ENCODE measurements at regions of chr17 and their contacts with region 1.

Region 1: GRCh38 chr17:28896884-28897768 is at the start of gene FLOT2:
- DNase-seq: peak; percentile 41 to 77 (median 76)
- ATAC-seq: peak; percentile 84
- H3K4me3 ChIP-seq: peak within 1 kb of the TSS; percentile 82
- H3K4me3 Mint-ChIP-seq: peak within 1 kb of the TSS; percentile 86 to 98 (median 96)
- H3K27ac ChIP-seq: peak within 1 kb of the TSS; percentile 96
- H3K27ac Mint-ChIP-seq: peak within 1 kb of the TSS; percentile 95 to 99 (median 97)
- H3K4me1 ChIP-seq: peaks cover 43 to 45% of the 10 kb centered on the region in 2 donors
- H3K4me1 Mint-ChIP-seq: peaks cover 32 to 80% (median 64%) of the 10 kb centered on the region in 7 donors
- H3K27me3 ChIP-seq: no peaks in the 10 kb centered on the region
- H3K27me3 Mint-ChIP-seq: no peaks in the 10 kb centered on the region
- total RNA-seq, gene FLOT2: 134 to 252 (median 191) TPM

Region 2: DNA sequence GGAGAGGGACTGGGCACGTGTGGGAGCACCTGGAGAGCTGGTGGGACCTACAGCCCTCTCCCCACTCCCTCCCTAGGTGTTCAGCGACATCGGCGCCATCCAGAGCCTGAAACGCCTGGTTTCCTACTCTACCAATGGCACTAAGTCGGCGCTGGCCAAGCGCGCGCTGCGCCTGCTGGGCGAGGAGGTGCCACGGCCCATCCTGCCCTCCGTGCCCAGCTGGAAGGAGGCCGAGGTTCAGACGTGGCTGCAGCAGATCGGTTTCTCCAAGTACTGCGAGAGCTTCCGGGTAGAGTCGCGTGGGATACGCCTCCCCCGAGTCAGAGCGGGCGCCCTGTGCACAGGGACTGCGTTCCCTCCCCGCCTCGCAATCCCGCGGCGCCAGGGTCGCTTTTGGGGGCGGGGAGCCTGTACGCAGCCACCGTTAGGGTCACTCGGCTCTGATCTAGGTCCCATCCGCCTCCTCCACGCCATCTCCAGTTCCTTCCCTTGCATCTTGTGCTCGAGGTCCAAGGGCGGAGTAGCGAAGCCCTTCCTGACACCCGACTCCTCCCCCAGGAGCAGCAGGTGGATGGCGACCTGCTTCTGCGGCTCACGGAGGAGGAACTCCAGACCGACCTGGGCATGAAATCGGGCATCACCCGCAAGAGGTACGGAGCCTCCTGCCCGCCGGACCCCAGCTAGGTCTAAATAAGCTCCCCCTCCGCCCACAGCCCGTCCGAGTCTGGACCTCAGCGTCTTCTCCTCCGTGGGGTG is 512.7 kb before region 1 on chr17:
- CTCF ChIA-PET with region 1: no interaction called
- POLR2A ChIA-PET with region 1: no interaction called
- intact Hi-C with region 1: no loop called
- DNase-seq: peak; percentile 27 to 67 (median 57)
- ATAC-seq: peak; percentile 93
- H3K4me3 ChIP-seq: peak overlapping the region; percentile 78
- H3K4me3 Mint-ChIP-seq: peak overlapping the region; percentile 88 to 96 (median 94)
- H3K27ac ChIP-seq: peak overlapping the region; percentile 67
- H3K27ac Mint-ChIP-seq: peak overlapping the region; percentile 37 to 88 (median 77)
- H3K4me1 ChIP-seq: peaks cover 6 to 14% of the 10 kb centered on the region in 2 donors
- H3K4me1 Mint-ChIP-seq: peaks cover 8 to 48% (median 33%) of the 10 kb centered on the region in 7 donors
- H3K27me3 ChIP-seq: no peaks in the 10 kb centered on the region
- H3K27me3 Mint-ChIP-seq: peaks cover 0 to 10% (median 6%) of the 10 kb centered on the region in 5 donors

Region 3: DNA sequence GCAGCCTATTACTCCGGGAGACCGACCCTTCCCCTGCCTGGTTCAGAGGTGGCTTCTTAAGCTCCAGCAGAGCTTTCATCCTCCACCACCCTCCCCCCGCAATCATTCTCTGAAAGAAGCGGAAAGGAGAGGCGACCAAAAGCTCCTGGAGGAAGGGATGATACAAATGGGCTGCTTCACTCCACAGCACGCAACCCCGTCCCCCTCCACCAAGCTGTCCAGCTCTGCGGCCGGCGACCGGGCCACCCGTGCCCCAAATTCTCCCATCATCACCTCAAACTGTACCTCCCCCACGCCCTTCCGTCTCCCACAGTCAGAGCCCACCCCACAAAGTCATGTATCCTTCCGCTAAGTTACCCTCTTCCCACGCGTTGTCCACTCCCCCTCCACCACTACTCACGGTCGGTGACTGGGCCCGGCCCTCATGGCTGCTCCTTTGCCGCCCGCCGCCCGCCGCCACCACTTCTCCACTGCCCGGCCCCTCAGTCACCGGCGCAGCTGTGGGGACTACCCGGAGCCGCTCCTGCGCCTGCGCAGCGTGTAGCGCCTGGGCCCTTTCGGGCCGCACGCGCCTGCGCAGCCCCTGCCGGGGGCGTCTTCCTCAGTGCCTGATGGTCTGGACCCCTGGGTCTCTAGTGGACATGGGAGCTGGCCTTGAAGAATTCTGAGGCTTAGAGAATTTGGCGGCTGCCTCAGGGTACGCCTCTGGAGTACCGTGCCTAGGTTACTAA is 54.7 kb before region 1 on chr17 and contains the start of gene FAM222B:
- CTCF ChIA-PET with region 1: interaction called, 5 read pairs
- POLR2A ChIA-PET with region 1: interaction called, 22 read pairs
- intact Hi-C with region 1: loop called in 1 of 2 experiments (anchors 1 kb)
- DNase-seq: peak; percentile 80 to 91 (median 86)
- ATAC-seq: peak; percentile 98
- H3K4me3 ChIP-seq: peak within 1 kb of the TSS; percentile 77
- H3K4me3 Mint-ChIP-seq: peak within 1 kb of the TSS; percentile 96 to 100 (median 98)
- H3K27ac ChIP-seq: peak within 1 kb of the TSS; percentile 78
- H3K27ac Mint-ChIP-seq: peak within 1 kb of the TSS; percentile 83 to 97 (median 92)
- H3K4me1 ChIP-seq: peaks cover 8 to 13% of the 10 kb centered on the region in 2 donors
- H3K4me1 Mint-ChIP-seq: peaks cover 6 to 31% (median 26%) of the 10 kb centered on the region in 7 donors
- H3K27me3 ChIP-seq: no peaks in the 10 kb centered on the region
- H3K27me3 Mint-ChIP-seq: no peaks in the 10 kb centered on the region
- total RNA-seq, gene FAM222B: 16.5 to 24.4 (median 22.3) TPM

Region 4: GRCh38 chr17:28849281-28849680 is 47.8 kb before region 1 on chr17:
- CTCF ChIA-PET with region 1: interaction called, 10 read pairs
- POLR2A ChIA-PET with region 1: interaction called, 19 read pairs
- intact Hi-C with region 1: loop called in 1 of 2 experiments (anchors 1 kb)
- DNase-seq: no peak
- ATAC-seq: peak; percentile 51
- H3K4me3 ChIP-seq: no peak overlapping the region
- H3K4me3 Mint-ChIP-seq: no peak overlapping the region
- H3K27ac ChIP-seq: no peak overlapping the region
- H3K27ac Mint-ChIP-seq: peak overlapping the region in 1 of 9 donors; percentile 48
- H3K4me1 ChIP-seq: peaks cover 0 to 3% of the 10 kb centered on the region in 2 donors
- H3K4me1 Mint-ChIP-seq: peaks cover 0 to 6% (median 0%) of the 10 kb centered on the region in 7 donors
- H3K27me3 ChIP-seq: no peaks in the 10 kb centered on the region
- H3K27me3 Mint-ChIP-seq: no peaks in the 10 kb centered on the region

Region 5: GRCh38 chr17:28871056-28871579 is 26.0 kb before region 1 on chr17:
- CTCF ChIA-PET with region 1: interaction called, 8 read pairs
- POLR2A ChIA-PET with region 1: interaction called, 67 read pairs
- intact Hi-C with region 1: loop called (anchors 1 to 2 kb)
- DNase-seq: peak in 7 of 9 donors; percentile 30 to 61 (median 54)
- ATAC-seq: peak; percentile 93
- H3K4me3 ChIP-seq: no peak overlapping the region
- H3K4me3 Mint-ChIP-seq: peak overlapping the region; percentile 32 to 81 (median 70)
- H3K27ac ChIP-seq: peak overlapping the region; percentile 67
- H3K27ac Mint-ChIP-seq: peak overlapping the region; percentile 90 to 100 (median 96)
- H3K4me1 ChIP-seq: peaks cover 8 to 10% of the 10 kb centered on the region in 2 donors
- H3K4me1 Mint-ChIP-seq: peaks cover 7 to 21% (median 14%) of the 10 kb centered on the region in 7 donors
- H3K27me3 ChIP-seq: no peaks in the 10 kb centered on the region
- H3K27me3 Mint-ChIP-seq: no peaks in the 10 kb centered on the region

Region 6: GRCh38 chr17:29038085-29038795 is 141.1 kb after region 1 on chr17:
- CTCF ChIA-PET with region 1: no interaction called
- POLR2A ChIA-PET with region 1: no interaction called
- intact Hi-C with region 1: no loop called
- DNase-seq: no peak
- ATAC-seq: no peak
- H3K4me3 ChIP-seq: no peak overlapping the region
- H3K4me3 Mint-ChIP-seq: no peak overlapping the region
- H3K27ac ChIP-seq: no peak overlapping the region
- H3K27ac Mint-ChIP-seq: no peak overlapping the region
- H3K4me1 ChIP-seq: no peaks in the 10 kb centered on the region
- H3K4me1 Mint-ChIP-seq: peaks cover 0 to 14% (median 0%) of the 10 kb centered on the region in 7 donors
- H3K27me3 ChIP-seq: no peaks in the 10 kb centered on the region
- H3K27me3 Mint-ChIP-seq: peaks cover 17 to 40% (median 22%) of the 10 kb centered on the region in 5 donors

Region 7: GRCh38 chr17:29048440-29049368 is 151.6 kb after region 1 on chr17:
- CTCF ChIA-PET with region 1: no interaction called
- POLR2A ChIA-PET with region 1: no interaction called
- intact Hi-C with region 1: no loop called
- DNase-seq: no peak
- ATAC-seq: no peak
- H3K4me3 ChIP-seq: no peak overlapping the region
- H3K4me3 Mint-ChIP-seq: no peak overlapping the region
- H3K27ac ChIP-seq: no peak overlapping the region
- H3K27ac Mint-ChIP-seq: no peak overlapping the region
- H3K4me1 ChIP-seq: no peaks in the 10 kb centered on the region
- H3K4me1 Mint-ChIP-seq: no peaks in the 10 kb centered on the region
- H3K27me3 ChIP-seq: no peaks in the 10 kb centered on the region
- H3K27me3 Mint-ChIP-seq: peaks cover 3 to 25% (median 15%) of the 10 kb centered on the region in 5 donors

Region 8: DNA sequence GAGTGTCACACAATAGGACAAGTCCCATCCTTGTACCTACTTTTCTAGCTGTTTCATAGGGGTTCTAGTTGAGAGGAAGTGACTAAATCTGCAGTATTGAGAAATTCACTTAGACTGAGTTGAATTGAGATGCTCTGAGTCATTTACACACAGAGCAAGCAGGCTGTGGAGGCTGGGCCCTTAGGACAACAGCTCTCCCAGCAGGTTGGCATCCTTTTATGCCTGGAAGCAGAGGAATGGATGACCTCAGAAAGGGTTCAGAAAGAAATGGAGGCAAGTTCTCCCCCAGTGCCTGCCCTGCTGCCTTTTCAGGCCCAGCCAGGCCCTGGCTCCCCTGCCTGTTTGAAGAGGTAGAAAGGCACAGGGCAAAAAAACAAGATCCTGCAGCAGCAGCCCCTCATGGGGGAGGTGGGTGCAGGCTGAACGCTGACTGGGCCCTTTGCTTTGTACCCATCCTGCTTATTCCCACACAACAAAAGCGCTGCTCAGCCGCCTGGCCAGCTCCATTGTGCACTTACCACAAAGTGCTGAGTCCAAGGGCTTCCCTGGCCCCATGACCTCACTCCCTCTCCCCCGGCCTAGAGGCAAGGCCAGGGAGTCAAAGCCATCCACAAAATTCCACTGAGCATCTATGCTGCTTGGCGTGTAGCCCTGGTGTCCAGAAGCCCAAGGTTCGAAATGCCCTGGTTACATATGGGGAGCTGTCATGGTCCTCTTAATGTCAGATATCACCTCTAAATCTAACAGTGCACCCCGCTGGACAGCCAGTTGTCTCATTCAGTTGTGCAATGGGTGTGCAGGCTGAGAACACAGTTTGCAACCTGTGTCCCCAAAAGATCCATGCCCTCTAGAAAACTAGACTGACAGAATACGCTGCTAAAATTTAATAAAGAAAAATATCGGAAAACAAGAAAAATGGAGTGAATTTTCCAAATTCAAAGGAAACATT is 344.2 kb after region 1 on chr17:
- CTCF ChIA-PET with region 1: no interaction called
- POLR2A ChIA-PET with region 1: no interaction called
- intact Hi-C with region 1: no loop called
- DNase-seq: no peak
- ATAC-seq: peak; percentile 88
- H3K4me3 ChIP-seq: no peak overlapping the region
- H3K4me3 Mint-ChIP-seq: no peak overlapping the region
- H3K27ac ChIP-seq: no peak overlapping the region
- H3K27ac Mint-ChIP-seq: peak overlapping the region in 1 of 9 donors; percentile 48
- H3K4me1 ChIP-seq: no peaks in the 10 kb centered on the region
- H3K4me1 Mint-ChIP-seq: peaks cover 0 to 7% (median 6%) of the 10 kb centered on the region in 7 donors
- H3K27me3 ChIP-seq: no peaks in the 10 kb centered on the region
- H3K27me3 Mint-ChIP-seq: no peaks in the 10 kb centered on the region

Measured in naive thymus-derived CD4-positive, alpha-beta T cell (primary cell).